ENCODE measurements at regions of chr6 and their contacts with region 1.

Region 1: GRCh38 chr6:138001750-138002349 is 105.4 kb downstream of the PERP start:
- DNase-seq: peak; percentile 32
- H3K4me3 ChIP-seq: no peak overlapping the region
- H3K27ac ChIP-seq: no peak overlapping the region
- H3K4me1 ChIP-seq: no peaks in the 10 kb centered on the region
- H3K27me3 ChIP-seq: peaks cover 6% of the 10 kb centered on the region
- CTCF ChIP-seq: peak; percentile 87

Region 2: GRCh38 chr6:138109042-138109997 is 107.5 kb after region 1 on chr6:
- intact Hi-C with region 1: loop called (anchors 2 kb)
- DNase-seq: peak; percentile 51
- H3K4me3 ChIP-seq: no peak overlapping the region
- H3K27ac ChIP-seq: peak overlapping the region; percentile 90
- H3K4me1 ChIP-seq: peaks cover 28% of the 10 kb centered on the region
- H3K27me3 ChIP-seq: peaks cover 35% of the 10 kb centered on the region
- CTCF ChIP-seq: peak; percentile 99